Mammary epithelial cell (primary cell): ENCODE measurements at regions of chr15 and their contacts with region 1.

Region 1: GRCh38 chr15:56245871-56246814 is 2.5 kb upstream of the RFX7 start:
- DNase-seq: peak; percentile 79
- H3K4me3 ChIP-seq: peak overlapping the region; percentile 27 to 43 (median 34)
- H3K27ac ChIP-seq: peak overlapping the region; percentile 19
- H3K4me1 ChIP-seq: peaks cover 17% of the 10 kb centered on the region
- H3K27me3 ChIP-seq: no peaks in the 10 kb centered on the region
- CTCF ChIP-seq: peak; percentile 100

Region 2: GRCh38 chr15:55897560-55898336 is 348.4 kb before region 1 on chr15:
- CTCF ChIA-PET with region 1: no interaction called
- dilution Hi-C with region 1: no loop called
- in situ Hi-C with region 1: no loop called
- intact Hi-C with region 1: loop called (anchors 5 kb)
- DNase-seq: peak; percentile 79
- H3K4me3 ChIP-seq: no peak overlapping the region
- H3K27ac ChIP-seq: peak overlapping the region; percentile 77
- H3K4me1 ChIP-seq: peaks cover 14% of the 10 kb centered on the region
- H3K27me3 ChIP-seq: no peaks in the 10 kb centered on the region
- CTCF ChIP-seq: peak; percentile 91 to 99

Region 3: DNA sequence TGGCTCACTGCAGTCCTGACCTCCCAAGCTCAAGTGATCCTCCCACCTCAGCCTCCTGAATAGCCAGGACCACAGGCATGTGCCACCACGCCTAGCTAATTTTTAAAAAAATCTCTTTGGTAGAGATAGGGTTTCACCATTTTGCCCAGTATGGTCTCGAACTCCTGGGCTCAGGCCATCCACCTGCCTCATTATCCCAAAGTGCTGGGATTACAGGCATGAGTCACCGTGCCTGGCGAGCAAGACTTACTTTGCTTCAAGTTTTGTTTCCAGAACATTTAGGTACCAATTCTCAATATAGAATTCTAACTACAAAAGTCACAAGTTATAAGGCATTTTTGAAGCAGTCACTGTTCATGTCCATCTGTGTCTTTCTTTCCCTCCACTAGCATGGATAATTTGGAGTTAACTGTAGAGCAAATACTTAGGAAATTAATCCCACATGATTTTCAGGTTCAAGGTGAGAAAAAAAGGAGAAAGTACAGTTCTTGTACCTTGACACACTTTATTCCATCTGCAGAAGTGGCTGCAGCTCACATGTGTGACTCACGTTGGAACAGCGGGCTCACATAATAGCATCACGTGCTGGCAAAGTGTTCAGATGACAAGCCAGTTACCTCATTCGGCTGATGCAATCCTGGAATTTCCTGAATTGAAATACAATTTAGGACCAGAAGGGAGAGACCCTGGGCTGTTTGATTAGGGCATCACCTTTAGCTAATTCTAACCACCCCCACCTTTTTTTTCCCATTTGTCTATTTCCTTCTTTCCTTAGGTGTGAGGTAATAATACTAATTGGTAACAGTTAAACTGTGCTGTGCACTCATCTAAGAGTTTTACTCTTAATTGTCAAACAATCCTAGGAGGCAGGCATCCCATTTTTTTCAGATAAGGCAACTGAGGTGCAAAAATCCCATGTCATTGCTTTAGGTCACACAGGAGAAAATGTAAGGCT is 205.8 kb before region 1 on chr15:
- CTCF ChIA-PET with region 1: no interaction called
- dilution Hi-C with region 1: no loop called
- in situ Hi-C with region 1: no loop called
- intact Hi-C with region 1: no loop called
- DNase-seq: peak; percentile 97
- H3K4me3 ChIP-seq: no peak overlapping the region
- H3K27ac ChIP-seq: peak overlapping the region; percentile 97
- H3K4me1 ChIP-seq: peaks cover 47% of the 10 kb centered on the region
- H3K27me3 ChIP-seq: no peaks in the 10 kb centered on the region
- CTCF ChIP-seq: no peak

Region 4: GRCh38 chr15:56052395-56053045 is 193.6 kb before region 1 on chr15:
- CTCF ChIA-PET with region 1: interaction called, 3 read pairs
- dilution Hi-C with region 1: no loop called
- in situ Hi-C with region 1: no loop called
- intact Hi-C with region 1: loop called (anchors 2 kb)
- DNase-seq: peak; percentile 48
- H3K4me3 ChIP-seq: no peak overlapping the region
- H3K27ac ChIP-seq: peak overlapping the region; percentile 4
- H3K4me1 ChIP-seq: peaks cover 8% of the 10 kb centered on the region
- H3K27me3 ChIP-seq: no peaks in the 10 kb centered on the region
- CTCF ChIP-seq: peak; percentile 71 to 81

Region 5: DNA sequence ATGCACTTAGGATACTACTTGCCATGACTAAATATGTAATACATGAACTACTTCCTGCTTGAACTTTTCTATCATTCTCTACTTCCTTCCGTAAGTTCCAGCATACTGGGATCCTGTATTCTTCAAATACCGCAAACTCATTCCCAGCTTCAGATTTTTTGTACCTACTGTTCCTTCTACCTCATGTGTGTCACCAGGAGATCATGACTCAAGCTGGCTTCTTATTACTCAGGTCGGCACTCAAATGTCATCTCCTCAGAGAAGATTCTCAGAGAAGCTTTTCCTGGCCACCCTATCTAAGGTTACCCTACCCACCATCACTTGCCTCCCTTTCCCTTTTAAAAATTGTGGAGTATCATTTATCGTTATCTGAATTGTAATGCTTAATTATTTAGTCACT is 69.1 kb before region 1 on chr15:
- CTCF ChIA-PET with region 1: no interaction called
- dilution Hi-C with region 1: no loop called
- in situ Hi-C with region 1: no loop called
- intact Hi-C with region 1: no loop called
- DNase-seq: no peak
- H3K4me3 ChIP-seq: no peak overlapping the region
- H3K27ac ChIP-seq: no peak overlapping the region
- H3K4me1 ChIP-seq: no peaks in the 10 kb centered on the region
- H3K27me3 ChIP-seq: no peaks in the 10 kb centered on the region
- CTCF ChIP-seq: no peak

Region 6: DNA sequence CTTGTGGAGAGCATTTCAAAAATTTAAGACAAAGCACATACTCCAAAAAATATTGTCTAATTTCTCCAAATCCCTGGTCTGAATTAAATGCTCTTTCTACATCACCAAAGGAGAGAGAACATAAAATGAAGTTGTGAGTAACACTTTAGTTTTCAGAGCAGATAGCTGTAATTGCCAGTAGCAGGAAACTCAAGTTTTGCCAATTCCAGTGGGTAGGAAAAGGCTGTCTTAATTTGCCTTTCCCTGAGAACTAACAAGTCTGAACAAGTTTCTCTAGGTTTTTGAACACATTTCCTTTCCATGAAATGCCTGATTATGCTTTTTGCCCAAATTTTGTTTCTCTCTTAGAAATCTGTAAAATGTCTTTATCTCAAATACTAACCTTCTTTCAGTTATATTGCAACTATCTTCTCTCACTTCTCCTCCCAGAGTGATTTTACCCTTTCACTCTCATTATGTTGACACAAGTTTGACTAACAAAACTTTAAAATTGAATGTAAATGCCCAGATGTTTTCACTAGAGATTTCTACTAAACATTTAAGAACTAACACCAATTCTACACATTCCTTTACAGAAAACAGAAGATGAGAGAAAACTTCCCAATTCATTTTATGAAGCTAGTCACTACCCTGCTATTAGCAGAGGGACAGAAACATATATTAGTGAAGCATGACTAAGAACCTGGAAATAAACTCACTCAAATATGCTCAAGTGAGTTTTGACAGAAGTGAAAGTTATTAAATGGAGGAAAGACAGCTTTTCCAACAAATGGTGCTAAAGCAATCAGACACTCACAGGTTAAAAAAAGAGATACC is 40.9 kb before region 1 on chr15:
- CTCF ChIA-PET with region 1: no interaction called
- dilution Hi-C with region 1: no loop called
- in situ Hi-C with region 1: no loop called
- intact Hi-C with region 1: loop called (anchors 2 kb)
- DNase-seq: peak; percentile 63
- H3K4me3 ChIP-seq: peak overlapping the region in 2 of 3 experiments; percentile 5 to 27
- H3K27ac ChIP-seq: peak overlapping the region; percentile 45
- H3K4me1 ChIP-seq: peaks cover 10% of the 10 kb centered on the region
- H3K27me3 ChIP-seq: no peaks in the 10 kb centered on the region
- CTCF ChIP-seq: no peak

Region 7: GRCh38 chr15:56307126-56307525 is 61.0 kb after region 1 on chr15:
- CTCF ChIA-PET with region 1: no interaction called
- dilution Hi-C with region 1: no loop called
- in situ Hi-C with region 1: no loop called
- intact Hi-C with region 1: no loop called
- DNase-seq: no peak
- H3K4me3 ChIP-seq: no peak overlapping the region
- H3K27ac ChIP-seq: no peak overlapping the region
- H3K4me1 ChIP-seq: no peaks in the 10 kb centered on the region
- H3K27me3 ChIP-seq: no peaks in the 10 kb centered on the region
- CTCF ChIP-seq: no peak

Region 8: GRCh38 chr15:56342653-56343052 is 96.5 kb after region 1 on chr15:
- CTCF ChIA-PET with region 1: no interaction called
- dilution Hi-C with region 1: loop called (anchors 5 kb)
- in situ Hi-C with region 1: no loop called
- intact Hi-C with region 1: no loop called
- DNase-seq: peak; percentile 91
- H3K4me3 ChIP-seq: no peak overlapping the region
- H3K27ac ChIP-seq: no peak overlapping the region
- H3K4me1 ChIP-seq: peaks cover 23% of the 10 kb centered on the region
- H3K27me3 ChIP-seq: no peaks in the 10 kb centered on the region
- CTCF ChIP-seq: no peak